ENCODE measurements at regions of chr17 and their contacts with region 1.

Region 1: GRCh38 chr17:40362696-40363110 is 1.8 kb downstream of the GJD3 start:
- DNase-seq: peak; percentile 52 to 79 (median 65)
- H3K4me3 ChIP-seq: no peak overlapping the region
- H3K4me3 Mint-ChIP-seq: peak overlapping the region; percentile 33 to 81 (median 59)
- H3K27ac ChIP-seq: no peak overlapping the region
- H3K27ac Mint-ChIP-seq: no peak overlapping the region
- H3K4me1 ChIP-seq: peaks cover 11% of the 10 kb centered on the region
- H3K4me1 Mint-ChIP-seq: peaks cover 9 to 22% (median 9%) of the 10 kb centered on the region in 3 donors
- H3K27me3 ChIP-seq: no peaks in the 10 kb centered on the region
- H3K27me3 Mint-ChIP-seq: peaks cover 7 to 17% of the 10 kb centered on the region in 2 donors

Region 2: GRCh38 chr17:40303009-40303657 is 59.6 kb before region 1 on chr17:
- CTCF ChIA-PET with region 1: interaction called, 365 read pairs
- POLR2A ChIA-PET with region 1: no interaction called
- DNase-seq: peak in 4 of 5 donors; percentile 44 to 66 (median 60)
- H3K4me3 ChIP-seq: no peak overlapping the region
- H3K4me3 Mint-ChIP-seq: peak overlapping the region in 1 of 7 donors; percentile 1
- H3K27ac ChIP-seq: no peak overlapping the region
- H3K27ac Mint-ChIP-seq: peak overlapping the region in 7 of 8 donors; percentile 2 to 80 (median 51)
- H3K4me1 ChIP-seq: peaks cover 29% of the 10 kb centered on the region
- H3K4me1 Mint-ChIP-seq: peaks cover 11 to 17% (median 16%) of the 10 kb centered on the region in 3 donors
- H3K27me3 ChIP-seq: no peaks in the 10 kb centered on the region
- H3K27me3 Mint-ChIP-seq: no peaks in the 10 kb centered on the region

Region 3: GRCh38 chr17:40323391-40324381 is 39.0 kb before region 1 on chr17:
- CTCF ChIA-PET with region 1: interaction called, 11 read pairs
- POLR2A ChIA-PET with region 1: no interaction called
- DNase-seq: peak; percentile 77 to 93 (median 89)
- H3K4me3 ChIP-seq: peak overlapping the region; percentile 92
- H3K4me3 Mint-ChIP-seq: peak overlapping the region; percentile 86 to 98 (median 98)
- H3K27ac ChIP-seq: peak overlapping the region; percentile 100
- H3K27ac Mint-ChIP-seq: peak overlapping the region; percentile 98 to 100 (median 100)
- H3K4me1 ChIP-seq: peaks cover 91% of the 10 kb centered on the region
- H3K4me1 Mint-ChIP-seq: peaks cover 92 to 97% (median 96%) of the 10 kb centered on the region in 3 donors
- H3K27me3 ChIP-seq: no peaks in the 10 kb centered on the region
- H3K27me3 Mint-ChIP-seq: peaks cover 0 to 8% of the 10 kb centered on the region in 2 donors

Measured in CD8-positive, alpha-beta memory T cell (primary cell).